Activated B cell treated with CpG ODN at 0.5 μM for 24 hours (primary cell): ENCODE measurements at regions of chr15 and their contacts with region 1.

Region 1: DNA sequence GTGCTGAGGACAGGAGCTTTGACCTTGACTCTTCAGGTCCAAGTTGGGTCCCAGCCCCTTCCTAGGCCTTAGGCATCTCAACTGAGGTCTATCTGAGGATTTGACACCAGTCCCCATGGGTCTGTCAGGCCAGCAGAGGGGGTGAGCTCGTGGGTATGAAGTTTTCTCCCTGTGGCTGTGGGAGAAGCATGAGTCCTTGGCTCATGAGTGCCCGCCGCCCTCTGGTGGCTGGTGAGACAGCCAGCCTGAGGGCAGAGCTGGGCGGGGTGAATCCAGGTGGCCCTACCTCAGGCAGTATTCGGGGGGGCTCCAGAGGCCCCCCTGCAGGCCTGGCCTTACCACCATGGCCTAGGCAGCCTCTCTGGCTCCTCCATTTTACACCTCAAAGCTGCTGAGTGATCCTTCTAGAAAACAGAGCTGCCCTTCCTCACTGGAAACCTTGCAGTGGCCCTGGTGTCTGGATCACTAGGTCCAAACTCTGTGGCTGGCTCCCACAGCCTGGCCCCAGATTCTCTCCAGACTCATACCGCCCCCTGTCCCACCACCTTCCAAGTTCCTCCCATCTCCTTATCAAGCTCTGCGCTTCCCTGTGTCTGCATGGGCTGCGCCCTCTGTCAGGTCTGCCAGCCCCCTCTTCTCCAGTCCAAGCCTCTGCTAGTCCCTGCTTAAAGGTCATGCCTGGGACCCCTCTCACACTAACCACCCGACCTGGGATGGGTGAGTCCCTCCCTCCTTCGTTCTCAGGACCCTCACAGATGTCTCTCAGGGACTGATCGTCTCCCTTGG is 16.1 kb downstream of the SH2D7 start:
- DNase-seq: peak; percentile 72
- ATAC-seq: peak; percentile 95
- H3K4me3 Mint-ChIP-seq: no peak overlapping the region
- H3K27ac Mint-ChIP-seq: no peak overlapping the region
- H3K4me1 Mint-ChIP-seq: peaks cover 5% of the 10 kb centered on the region
- H3K27me3 Mint-ChIP-seq: no peaks in the 10 kb centered on the region
- CTCF ChIP-seq: no peak

Region 2: GRCh38 chr15:77966540-77967290 is 141.8 kb before region 1 on chr15:
- CTCF ChIA-PET with region 1: interaction called, 157 read pairs
- POLR2A ChIA-PET with region 1: interaction called, 3 read pairs
- intact Hi-C with region 1: loop called (anchors 1 kb)
- DNase-seq: no peak
- ATAC-seq: peak; percentile 77
- H3K4me3 Mint-ChIP-seq: no peak overlapping the region
- H3K27ac Mint-ChIP-seq: no peak overlapping the region
- H3K4me1 Mint-ChIP-seq: no peaks in the 10 kb centered on the region
- H3K27me3 Mint-ChIP-seq: peaks cover 8% of the 10 kb centered on the region
- CTCF ChIP-seq: peak; percentile 83

Region 3: GRCh38 chr15:78034495-78035191 is 73.8 kb before region 1 on chr15:
- CTCF ChIA-PET with region 1: interaction called, 17 read pairs
- POLR2A ChIA-PET with region 1: no interaction called
- intact Hi-C with region 1: no loop called
- DNase-seq: peak; percentile 26
- ATAC-seq: peak; percentile 80
- H3K4me3 Mint-ChIP-seq: peak overlapping the region; percentile 45
- H3K27ac Mint-ChIP-seq: peak overlapping the region; percentile 51
- H3K4me1 Mint-ChIP-seq: peaks cover 50% of the 10 kb centered on the region
- H3K27me3 Mint-ChIP-seq: no peaks in the 10 kb centered on the region
- CTCF ChIP-seq: no peak

Region 4: GRCh38 chr15:78131295-78132061 is 23.0 kb after region 1 on chr15 and contains the start of gene CIB2:
- CTCF ChIA-PET with region 1: interaction called, 22 read pairs
- POLR2A ChIA-PET with region 1: interaction called, 6 read pairs
- intact Hi-C with region 1: loop called (anchors 1 kb)
- DNase-seq: peak; percentile 88
- ATAC-seq: peak; percentile 96
- H3K4me3 Mint-ChIP-seq: peak within 1 kb of the TSS; percentile 84
- H3K27ac Mint-ChIP-seq: peak within 1 kb of the TSS; percentile 66
- H3K4me1 Mint-ChIP-seq: peaks cover 16% of the 10 kb centered on the region
- H3K27me3 Mint-ChIP-seq: no peaks in the 10 kb centered on the region
- CTCF ChIP-seq: no peak
- total RNA-seq, gene CIB2: 3.5 and 3.7 TPM in 2 replicates

Region 5: GRCh38 chr15:78422571-78423340 is 314.3 kb after region 1 on chr15:
- CTCF ChIA-PET with region 1: interaction called, 6 read pairs
- POLR2A ChIA-PET with region 1: no interaction called
- intact Hi-C with region 1: loop called (anchors 1 kb)
- DNase-seq: peak; percentile 35
- ATAC-seq: peak; percentile 91
- H3K4me3 Mint-ChIP-seq: no peak overlapping the region
- H3K27ac Mint-ChIP-seq: no peak overlapping the region
- H3K4me1 Mint-ChIP-seq: no peaks in the 10 kb centered on the region
- H3K27me3 Mint-ChIP-seq: peaks cover 19% of the 10 kb centered on the region
- CTCF ChIP-seq: peak; percentile 86